ENCODE measurements at regions of chr11 and their contacts with region 1.

Region 1: GRCh38 chr11:75532200-75533048 is 6.7 kb upstream of the GDPD5 start:
- DNase-seq: peak; percentile 67
- ATAC-seq: peak; percentile 63 to 69

Region 2: DNA sequence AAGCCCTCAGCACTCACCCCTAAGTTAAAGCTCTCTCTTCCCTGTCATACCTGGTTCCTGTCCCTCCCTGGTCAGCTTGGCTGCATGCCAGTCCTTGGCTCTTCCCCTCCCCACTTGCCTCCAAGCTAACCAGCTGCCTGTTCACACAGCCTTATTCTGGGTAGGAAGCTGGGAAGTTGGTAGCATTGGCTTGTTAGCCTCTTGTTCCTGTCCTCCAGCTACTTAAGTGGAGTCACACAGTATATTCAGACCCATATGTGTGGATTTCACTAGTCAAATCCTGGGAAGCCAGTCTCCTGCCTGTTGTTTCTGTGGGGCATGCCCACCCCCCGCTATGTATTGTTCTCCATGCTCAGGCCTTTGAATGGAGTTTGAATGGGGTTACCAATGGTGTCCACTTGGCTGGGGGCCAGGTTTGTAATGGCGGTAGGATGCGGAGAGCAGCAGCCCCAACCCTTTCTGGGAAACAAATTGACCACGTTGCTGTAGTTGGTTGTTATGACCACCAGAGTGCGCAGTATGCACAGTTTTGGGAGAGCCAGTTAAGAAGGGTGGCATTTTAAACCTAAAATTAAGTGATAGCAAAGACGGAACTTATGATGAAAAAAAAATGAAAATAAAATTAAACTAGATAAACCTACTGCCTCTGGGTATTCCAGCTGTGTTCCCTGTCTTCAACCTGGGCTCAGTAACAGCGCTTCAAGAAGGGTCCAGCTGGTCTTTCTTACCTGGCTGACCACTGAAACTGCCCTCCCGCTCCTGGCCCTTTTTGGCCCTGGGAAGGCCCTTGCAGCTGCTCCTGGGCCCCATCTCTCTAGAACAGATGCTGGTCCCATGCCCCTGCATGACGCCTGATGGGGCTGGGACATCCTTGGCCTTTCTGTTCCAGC is 143.8 kb before region 1 on chr11:
- intact Hi-C with region 1: loop called in 1 of 2 experiments (anchors 2 kb)
- DNase-seq: peak; percentile 73
- ATAC-seq: peak; percentile 60 to 74

Region 3: DNA sequence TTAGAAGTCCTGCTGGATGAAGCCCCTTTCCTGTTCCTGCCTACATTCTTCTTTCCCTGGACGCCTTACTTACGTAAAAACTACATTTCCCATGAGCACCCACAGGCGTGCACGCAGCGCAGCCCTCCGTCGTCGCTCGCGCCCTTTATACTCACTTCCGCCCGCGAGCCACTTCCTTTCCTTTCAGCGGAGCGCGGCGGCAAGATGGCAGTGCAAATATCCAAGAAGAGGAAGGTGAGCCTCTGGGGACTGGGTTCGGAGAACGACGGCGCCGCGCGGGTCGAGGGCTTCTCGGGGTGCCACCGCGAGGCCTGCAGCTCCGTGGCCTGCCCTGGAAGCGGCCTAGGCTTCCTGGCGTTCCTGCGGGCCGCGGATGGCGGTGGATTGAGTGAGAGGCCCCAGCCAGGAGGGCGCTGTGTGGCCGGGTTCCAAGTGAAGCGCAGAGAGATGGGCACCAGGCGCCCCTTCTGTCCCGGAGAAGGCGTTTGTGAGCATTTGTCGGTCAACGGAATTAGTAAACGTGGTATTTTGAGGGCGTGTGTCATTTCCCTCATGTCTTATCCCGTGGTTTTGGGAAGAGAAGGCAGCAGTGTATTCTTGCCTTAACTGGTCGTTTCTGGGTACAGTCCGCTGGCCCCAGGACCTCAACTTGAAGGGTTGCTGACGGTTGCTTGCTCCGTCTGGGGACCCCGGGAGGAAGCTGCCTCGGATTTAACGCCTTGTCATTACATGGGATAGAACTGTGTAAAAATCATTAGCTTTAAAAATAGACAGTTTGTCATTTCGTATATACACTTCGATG is 132.9 kb before region 1 on chr11 and contains the start of gene RPS3:
- intact Hi-C with region 1: loop called (anchors 5 kb)
- DNase-seq: peak; percentile 95
- ATAC-seq: peak; percentile 97 to 98
- total RNA-seq, gene RPS3: 1,106 to 1,117 TPM

Region 4: GRCh38 chr11:75445315-75445953 is 87.0 kb before region 1 on chr11:
- intact Hi-C with region 1: loop called (anchors 1 to 2 kb)
- DNase-seq: peak; percentile 71
- ATAC-seq: peak; percentile 77 to 80